IMR-90 (cell line): ENCODE measurements at regions of chr17 and their contacts with region 1.

Region 1: GRCh38 chr17:38351412-38352222 is at the start of gene SOCS7:
- DNase-seq: peak; percentile 90
- ATAC-seq: peak; percentile 89
- H3K4me3 ChIP-seq: peak within 1 kb of the TSS; percentile 80
- H3K27ac ChIP-seq: peak within 1 kb of the TSS; percentile 78
- H3K4me1 ChIP-seq: peaks cover 4% of the 10 kb centered on the region
- H3K27me3 ChIP-seq: no peaks in the 10 kb centered on the region
- CTCF ChIP-seq: no peak
- POLR2A ChIP-seq: peak; percentile 80
- RAD21 ChIP-seq: no peak
- total RNA-seq, gene SOCS7: 6.5 and 7.5 TPM in 2 replicates

Region 2: DNA sequence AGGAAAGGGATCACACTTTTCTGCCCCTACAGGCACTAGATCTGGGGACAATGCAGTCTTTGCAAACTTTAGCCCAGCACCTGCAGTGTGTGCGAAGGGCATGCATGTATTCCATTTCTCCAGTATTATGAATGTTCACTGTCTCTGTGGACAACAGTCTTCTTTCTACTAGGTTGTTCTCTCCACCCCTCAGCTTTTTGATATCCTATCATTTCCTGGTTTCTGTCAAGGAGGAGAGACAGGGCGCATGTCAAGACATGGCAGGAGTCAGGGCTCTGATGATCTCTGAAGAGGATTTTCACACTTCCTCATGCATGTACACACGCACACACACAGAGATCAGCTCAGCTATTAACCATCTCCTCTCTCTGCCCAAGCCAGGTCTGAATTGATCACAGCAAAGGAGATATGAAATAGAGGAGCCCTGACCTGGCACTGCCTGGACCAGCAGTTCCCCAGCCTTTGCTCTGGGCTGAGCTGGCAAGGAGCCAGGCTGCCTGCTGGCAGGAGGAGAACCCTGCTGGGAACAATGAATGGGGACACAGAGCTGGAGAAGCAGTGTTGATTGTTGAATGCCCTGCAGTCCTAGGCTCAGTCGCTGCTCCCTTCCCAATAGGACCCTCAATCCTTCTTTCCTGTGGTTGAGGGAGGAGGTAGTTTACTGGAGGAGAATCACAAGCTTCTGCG is 10.4 kb before region 1 on chr17:
- CTCF ChIA-PET with region 1: interaction called, 10 read pairs
- POLR2A ChIA-PET with region 1: no interaction called
- dilution Hi-C with region 1: no loop called
- in situ Hi-C with region 1: no loop called
- intact Hi-C with region 1: no loop called
- DNase-seq: no peak
- ATAC-seq: peak; percentile 24; the same call in 1 of the 2 replicates
- H3K4me3 ChIP-seq: no peak overlapping the region
- H3K27ac ChIP-seq: no peak overlapping the region
- H3K4me1 ChIP-seq: no peaks in the 10 kb centered on the region
- H3K27me3 ChIP-seq: peaks cover 50% of the 10 kb centered on the region
- CTCF ChIP-seq: no peak
- POLR2A ChIP-seq: no peak
- RAD21 ChIP-seq: no peak

Region 3: GRCh38 chr17:38415250-38416194 is 63.9 kb after region 1 on chr17:
- CTCF ChIA-PET with region 1: interaction called, 36 read pairs
- POLR2A ChIA-PET with region 1: interaction called, 4 read pairs
- dilution Hi-C with region 1: no loop called
- in situ Hi-C with region 1: no loop called
- intact Hi-C with region 1: loop called (anchors 1 kb)
- DNase-seq: peak; percentile 69
- ATAC-seq: peak; percentile 77
- H3K4me3 ChIP-seq: no peak overlapping the region
- H3K27ac ChIP-seq: no peak overlapping the region
- H3K4me1 ChIP-seq: peaks cover 11% of the 10 kb centered on the region
- H3K27me3 ChIP-seq: peaks cover 31% of the 10 kb centered on the region
- CTCF ChIP-seq: no peak
- POLR2A ChIP-seq: no peak
- RAD21 ChIP-seq: no peak

Region 4: DNA sequence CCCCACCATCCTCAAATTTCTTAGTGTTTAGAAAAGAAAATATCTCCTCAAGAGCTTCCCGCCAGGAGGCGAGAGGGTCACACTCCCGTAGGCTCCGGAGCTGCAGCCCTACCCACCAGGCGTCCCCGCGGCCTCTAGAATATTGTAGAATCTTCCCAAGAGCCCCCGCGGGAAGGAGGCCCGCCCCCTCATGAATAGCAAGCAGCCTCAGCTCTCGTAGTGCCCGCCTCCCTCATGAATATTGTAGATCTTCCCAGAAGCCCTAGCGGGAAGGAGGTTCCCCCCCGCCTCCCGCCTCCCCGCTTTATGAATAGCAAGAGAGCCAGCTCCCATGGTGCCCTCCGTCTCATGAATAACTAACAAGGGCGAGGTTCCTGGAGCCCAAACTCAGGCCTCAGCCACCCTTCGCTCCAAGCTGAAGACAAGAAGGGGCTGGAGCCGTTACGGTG is 615.7 kb after region 1 on chr17 and contains the start of gene FBXO47:
- CTCF ChIA-PET with region 1: no interaction called
- POLR2A ChIA-PET with region 1: no interaction called
- dilution Hi-C with region 1: no loop called
- in situ Hi-C with region 1: no loop called
- intact Hi-C with region 1: no loop called
- DNase-seq: peak; percentile 38
- ATAC-seq: peak; percentile 85
- H3K4me3 ChIP-seq: no peak within 1 kb of the TSS; the same call in 1 of the 2 replicates
- H3K27ac ChIP-seq: no peak within 1 kb of the TSS
- H3K4me1 ChIP-seq: no peaks in the 10 kb centered on the region; the same call in 1 of the 2 replicates
- H3K27me3 ChIP-seq: no peaks in the 10 kb centered on the region
- CTCF ChIP-seq: no peak
- POLR2A ChIP-seq: no peak
- RAD21 ChIP-seq: no peak
- total RNA-seq, gene FBXO47: under 0.01 TPM in 1 of 2 replicates, not detected in the other